ENCODE measurements at regions of chr22 and their contacts with region 1.

Region 1: DNA sequence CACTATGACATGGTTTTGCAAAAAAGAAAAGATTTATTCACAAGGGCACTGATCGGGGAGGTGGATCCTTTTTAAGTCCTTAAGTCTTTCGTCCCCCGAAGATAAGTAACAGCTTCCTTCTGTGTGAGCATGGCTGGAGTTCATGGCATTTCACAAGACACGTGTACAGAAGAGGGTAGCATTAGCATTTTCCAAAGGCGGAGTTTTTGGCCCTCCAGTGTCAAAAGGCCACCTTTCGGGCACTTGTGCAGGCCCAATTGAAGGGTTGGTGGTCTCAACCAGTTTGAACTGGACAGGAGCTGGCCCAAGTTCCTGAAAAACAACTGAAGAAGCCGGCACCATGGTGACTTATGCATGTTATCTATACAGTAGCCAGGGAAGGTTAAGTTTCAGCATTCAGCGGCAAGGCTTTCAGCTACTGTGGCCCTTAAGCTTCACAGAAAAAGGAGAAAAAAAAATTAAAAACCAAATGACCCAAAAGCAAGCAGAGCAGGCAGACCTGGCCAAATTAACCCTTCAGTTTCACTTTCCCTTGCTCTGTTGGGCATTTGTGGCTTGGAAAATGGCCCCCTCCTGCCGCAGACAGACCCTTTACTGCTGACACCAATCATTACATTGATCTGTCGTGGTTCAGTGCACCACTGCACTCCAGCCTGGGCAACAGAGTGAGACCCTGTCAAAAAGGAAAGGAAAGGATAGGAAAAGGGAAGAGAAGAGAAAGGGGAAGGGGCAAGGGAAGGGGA is 18.7 kb downstream of the ZNF74 start:
- DNase-seq: no peak
- ATAC-seq: no peak
- H3K4me3 ChIP-seq: no peak overlapping the region
- H3K27ac ChIP-seq: no peak overlapping the region
- H3K4me1 ChIP-seq: no peaks in the 10 kb centered on the region
- H3K27me3 ChIP-seq: no peaks in the 10 kb centered on the region
- CTCF ChIP-seq: no peak
- POLR2A ChIP-seq: no peak

Region 2: GRCh38 chr22:20456064-20456721 is 43.5 kb after region 1 on chr22:
- in situ Hi-C with region 1: loop called in 2 of 4 experiments (anchors 5 to 10 kb)
- intact Hi-C with region 1: loop called (anchors 5 kb)
- DNase-seq: peak; percentile 37 to 62
- ATAC-seq: peak; percentile 67 to 85
- H3K4me3 ChIP-seq: no peak overlapping the region
- H3K27ac ChIP-seq: no peak overlapping the region
- H3K4me1 ChIP-seq: no peaks in the 10 kb centered on the region
- H3K27me3 ChIP-seq: no peaks in the 10 kb centered on the region
- CTCF ChIP-seq: peak; percentile 52 to 82 (median 77)
- POLR2A ChIP-seq: no peak

Measured in gastrocnemius medialis (tissue), 4 donors.